Activated T-helper 2 cell treated with anti-CD3 and anti-CD28 coated beads, Interferon-gamma antibody, Interleukin-2, Interleukin-4, amounts not matched to agents 10 μg/mL and 5 μg/mL and 100 μg/mL, durations not matched to agents 14 hours and 24 hours and 36 hours (primary cell): ENCODE measurements at regions of chr12 and their contacts with region 1.

Region 1: GRCh38 chr12:118035246-118036041 is 18.9 kb downstream of the RFC5 start:
- DNase-seq: no peak
- H3K4me3 Mint-ChIP-seq: peak overlapping the region; percentile 28
- H3K27ac Mint-ChIP-seq: peak overlapping the region; percentile 97
- H3K4me1 Mint-ChIP-seq: peaks cover 36% of the 10 kb centered on the region
- H3K27me3 Mint-ChIP-seq: no peaks in the 10 kb centered on the region

Region 2: DNA sequence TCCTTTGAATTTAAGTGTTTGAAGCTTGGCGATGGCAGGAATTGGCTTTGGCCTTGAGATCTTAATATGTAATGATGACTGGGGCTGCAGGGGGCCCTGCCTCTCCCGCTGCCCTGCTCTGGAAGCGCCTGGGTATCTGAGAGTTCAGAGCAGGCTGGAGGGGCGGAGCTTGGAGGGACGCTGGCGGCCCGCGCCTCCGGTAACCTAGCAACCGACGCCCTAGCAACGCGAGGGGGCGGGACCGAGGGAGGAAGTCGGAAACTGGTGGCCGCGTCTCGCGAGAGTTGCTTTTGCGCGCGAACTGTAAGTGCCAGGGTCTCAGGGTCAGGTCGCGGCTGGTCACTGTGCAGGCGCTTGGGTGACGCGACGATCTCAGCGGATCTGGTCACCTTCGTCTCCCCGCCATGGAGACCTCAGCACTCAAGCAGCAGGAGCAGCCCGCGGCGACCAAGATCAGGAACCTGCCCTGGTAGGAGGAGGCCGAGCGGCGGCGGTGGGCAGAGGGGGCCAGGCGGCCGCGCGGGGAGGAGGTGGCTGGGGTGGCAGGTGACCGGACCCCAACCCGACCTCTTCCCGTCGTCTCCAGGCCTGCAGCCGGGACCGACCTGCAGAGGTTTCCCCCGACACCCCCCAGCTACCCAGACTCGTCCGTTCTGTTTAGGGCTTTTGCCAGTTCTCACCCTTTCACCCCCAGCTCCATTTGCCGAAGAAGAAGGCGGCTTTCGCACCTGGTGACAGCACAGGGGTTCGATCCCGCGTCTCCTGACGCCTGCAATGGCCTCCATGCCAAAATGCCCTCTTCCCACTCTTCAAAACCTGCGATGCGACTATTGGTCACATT is 18.8 kb before region 1 on chr12 and contains the start of gene RFC5:
- intact Hi-C with region 1: loop called (anchors 1 kb)
- DNase-seq: peak; percentile 95
- H3K4me3 Mint-ChIP-seq: peak within 1 kb of the TSS; percentile 88
- H3K27ac Mint-ChIP-seq: peak within 1 kb of the TSS; percentile 88
- H3K4me1 Mint-ChIP-seq: peaks cover 16% of the 10 kb centered on the region
- H3K27me3 Mint-ChIP-seq: peaks cover 2% of the 10 kb centered on the region
- total RNA-seq, gene RFC5: 61.9 and 65.8 TPM in 2 replicates

Region 3: GRCh38 chr12:118307069-118307954 is 271.9 kb after region 1 on chr12:
- intact Hi-C with region 1: loop called (anchors 5 kb)
- DNase-seq: no peak
- H3K4me3 Mint-ChIP-seq: peak overlapping the region; percentile 73
- H3K27ac Mint-ChIP-seq: peak overlapping the region; percentile 72
- H3K4me1 Mint-ChIP-seq: peaks cover 29% of the 10 kb centered on the region
- H3K27me3 Mint-ChIP-seq: no peaks in the 10 kb centered on the region

Region 4: GRCh38 chr12:118456741-118457140 is 421.3 kb after region 1 on chr12:
- intact Hi-C with region 1: no loop called
- DNase-seq: no peak
- H3K4me3 Mint-ChIP-seq: no peak overlapping the region
- H3K27ac Mint-ChIP-seq: no peak overlapping the region
- H3K4me1 Mint-ChIP-seq: peaks cover 3% of the 10 kb centered on the region
- H3K27me3 Mint-ChIP-seq: no peaks in the 10 kb centered on the region